Ovary (tissue), 10 donors: ENCODE measurements at regions of chr3 and their contacts with region 1.

Region 1: GRCh38 chr3:19954676-19955075 is 7.8 kb downstream of the RAB5A start:
- DNase-seq: no peak
- H3K4me3 ChIP-seq: no peak overlapping the region
- H3K27ac ChIP-seq: no peak overlapping the region
- H3K4me1 ChIP-seq: peaks cover 10% of the 10 kb centered on the region
- H3K27me3 ChIP-seq: no peaks in the 10 kb centered on the region
- CTCF ChIP-seq: no peak
- EP300 ChIP-seq: no peak
- POLR2A ChIP-seq: no peak

Region 2: DNA sequence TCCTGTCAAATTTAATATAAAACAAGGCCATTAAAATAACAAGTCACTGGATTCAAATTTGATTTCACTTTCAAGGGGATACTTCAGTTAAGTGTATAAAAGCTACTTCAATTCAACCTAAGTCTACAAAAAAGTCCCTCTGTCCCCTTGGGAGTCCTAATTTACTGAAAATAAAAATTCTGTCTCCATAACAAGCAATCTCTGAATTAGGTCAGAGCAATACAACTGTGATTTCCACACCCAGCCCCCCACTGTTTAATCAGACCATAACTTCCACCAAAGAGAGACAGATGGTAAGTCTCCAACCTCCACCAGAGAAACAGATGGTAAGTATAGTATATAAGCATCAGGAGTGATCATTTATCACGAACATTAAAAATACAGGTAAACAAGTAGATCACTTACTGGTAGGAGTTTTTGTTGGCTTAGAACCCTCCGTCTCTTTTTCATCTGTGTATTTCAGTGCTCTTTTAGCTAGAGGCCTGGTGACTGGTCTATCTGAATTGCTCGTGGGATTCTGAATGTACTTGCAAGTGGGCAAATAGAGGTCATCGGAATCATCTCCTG is 219.3 kb after region 1 on chr3:
- intact Hi-C with region 1: loop called in 1 of 4 experiments (anchors 5 kb)
- DNase-seq: no peak
- H3K4me3 ChIP-seq: no peak overlapping the region
- H3K27ac ChIP-seq: no peak overlapping the region
- H3K4me1 ChIP-seq: no peaks in the 10 kb centered on the region
- H3K27me3 ChIP-seq: no peaks in the 10 kb centered on the region
- CTCF ChIP-seq: no peak
- EP300 ChIP-seq: no peak
- POLR2A ChIP-seq: no peak

Region 3: GRCh38 chr3:20503394-20504082 is 548.9 kb after region 1 on chr3:
- intact Hi-C with region 1: no loop called
- DNase-seq: no peak
- H3K4me3 ChIP-seq: no peak overlapping the region
- H3K27ac ChIP-seq: no peak overlapping the region
- H3K4me1 ChIP-seq: no peaks in the 10 kb centered on the region
- H3K27me3 ChIP-seq: no peaks in the 10 kb centered on the region
- CTCF ChIP-seq: no peak
- EP300 ChIP-seq: no peak
- POLR2A ChIP-seq: no peak